ENCODE measurements at regions of chr15 and their contacts with region 1.

Region 1: GRCh38 chr15:34209421-34210282 is at the start of gene KATNBL1:
- DNase-seq: peak; percentile 99
- ATAC-seq: peak; percentile 90
- H3K4me3 ChIP-seq: peak within 1 kb of the TSS; percentile 92
- H3K27ac ChIP-seq: peak within 1 kb of the TSS; percentile 78
- H3K4me1 ChIP-seq: peaks cover 20% of the 10 kb centered on the region
- H3K27me3 ChIP-seq: no peaks in the 10 kb centered on the region
- CTCF ChIP-seq: peak; percentile 90
- total RNA-seq, gene KATNBL1: 51.6 and 57.6 TPM in 2 replicates

Region 2: DNA sequence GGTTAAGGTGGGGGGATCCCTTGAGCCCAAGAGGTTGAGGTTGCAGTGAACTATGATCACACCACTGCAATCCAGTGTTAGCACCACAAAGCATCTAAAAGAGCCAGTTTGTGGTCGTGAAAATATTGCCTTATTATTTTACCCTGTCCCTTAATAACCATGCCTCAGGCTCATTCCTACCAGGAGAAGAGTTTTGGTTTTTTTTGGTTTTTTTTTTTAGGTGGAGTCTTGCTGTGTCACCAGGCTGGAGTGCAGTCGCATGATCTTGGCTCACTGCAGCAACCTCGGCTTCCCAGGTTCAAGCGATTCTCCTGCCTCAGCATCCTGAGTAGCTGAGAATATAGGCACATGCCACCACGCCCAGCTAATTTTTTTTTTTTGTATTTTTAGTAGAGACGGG is 152.7 kb before region 1 on chr15:
- CTCF ChIA-PET with region 1: no interaction called
- POLR2A ChIA-PET with region 1: no interaction called
- intact Hi-C with region 1: loop called (anchors 1 kb)
- DNase-seq: no peak
- ATAC-seq: no peak
- H3K4me3 ChIP-seq: no peak overlapping the region
- H3K27ac ChIP-seq: no peak overlapping the region
- H3K4me1 ChIP-seq: no peaks in the 10 kb centered on the region
- H3K27me3 ChIP-seq: no peaks in the 10 kb centered on the region
- CTCF ChIP-seq: no peak

Region 3: DNA sequence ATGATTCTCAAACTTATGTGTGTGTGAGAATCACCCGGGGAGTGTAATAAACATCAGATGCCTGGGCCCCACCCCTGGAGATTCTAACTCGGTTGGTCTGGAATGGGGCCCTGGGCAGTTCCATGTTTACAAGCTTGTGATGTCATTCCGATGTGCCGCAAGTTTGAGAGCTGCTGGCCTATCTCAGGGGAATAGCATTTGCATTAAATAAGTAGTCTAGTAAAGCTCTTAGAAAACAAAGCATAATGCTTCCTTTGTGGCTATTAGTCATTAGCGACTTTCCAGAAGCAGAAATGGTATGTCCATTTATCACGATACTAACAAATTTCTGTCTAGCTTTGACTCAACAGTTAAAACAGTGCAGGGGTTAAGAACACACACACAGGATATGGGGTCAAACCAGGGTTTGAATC is 86.9 kb before region 1 on chr15:
- CTCF ChIA-PET with region 1: interaction called, 3 read pairs
- POLR2A ChIA-PET with region 1: interaction called, 11 read pairs
- intact Hi-C with region 1: no loop called
- DNase-seq: peak; percentile 91
- ATAC-seq: peak; percentile 87
- H3K4me3 ChIP-seq: no peak overlapping the region
- H3K27ac ChIP-seq: peak overlapping the region; percentile 88
- H3K4me1 ChIP-seq: peaks cover 26% of the 10 kb centered on the region
- H3K27me3 ChIP-seq: no peaks in the 10 kb centered on the region
- CTCF ChIP-seq: no peak

Region 4: GRCh38 chr15:34147371-34148140 is 62.1 kb before region 1 on chr15:
- CTCF ChIA-PET with region 1: no interaction called
- POLR2A ChIA-PET with region 1: no interaction called
- intact Hi-C with region 1: loop called (anchors 2 kb)
- DNase-seq: peak; percentile 78
- ATAC-seq: peak; percentile 98
- H3K4me3 ChIP-seq: no peak overlapping the region
- H3K27ac ChIP-seq: peak overlapping the region; percentile 48
- H3K4me1 ChIP-seq: peaks cover 18% of the 10 kb centered on the region
- H3K27me3 ChIP-seq: no peaks in the 10 kb centered on the region
- CTCF ChIP-seq: no peak

Region 5: DNA sequence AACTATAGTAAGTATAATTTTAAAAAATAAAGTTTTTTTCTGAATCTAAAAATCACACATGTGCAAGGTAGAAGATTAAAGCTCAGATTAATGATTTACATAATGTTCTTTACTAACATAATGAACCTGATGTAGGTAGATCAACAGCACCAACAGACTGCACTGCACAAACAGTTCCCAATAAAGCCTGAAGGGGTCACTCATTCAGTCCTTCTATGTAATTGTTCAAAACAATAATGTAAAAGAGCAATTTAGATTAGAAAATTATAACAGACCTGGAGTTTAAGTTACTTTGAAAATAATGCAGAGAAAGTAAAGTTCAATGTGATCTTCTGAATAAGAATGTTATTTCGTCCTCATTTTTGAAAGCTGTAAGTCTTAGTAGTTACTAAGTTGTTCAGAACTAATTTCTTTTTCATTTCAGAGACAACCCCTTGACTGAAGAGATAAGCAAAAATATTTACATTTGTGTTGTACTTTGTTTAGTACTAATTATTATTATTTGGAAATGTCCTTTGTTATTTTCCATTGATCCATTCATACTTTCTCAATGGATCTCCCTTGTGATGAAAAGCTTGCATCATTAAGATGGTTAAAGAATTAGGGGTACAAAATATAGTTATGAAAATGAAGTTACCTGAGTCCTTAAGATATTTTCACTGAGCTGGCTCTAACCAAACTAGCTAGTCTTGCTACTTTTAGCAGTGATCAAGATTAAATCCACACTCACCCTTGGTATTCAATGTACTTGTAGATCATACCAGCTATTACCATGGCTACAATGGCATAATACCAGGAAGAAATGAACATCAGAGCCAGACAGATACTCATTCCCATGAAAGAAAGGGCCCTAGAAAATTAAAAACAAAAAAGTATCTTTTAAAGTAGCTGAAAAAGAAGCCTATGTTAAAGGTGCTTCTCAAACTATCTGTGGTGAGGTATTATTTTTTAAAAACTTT is 32.0 kb after region 1 on chr15:
- CTCF ChIA-PET with region 1: no interaction called
- POLR2A ChIA-PET with region 1: no interaction called
- intact Hi-C with region 1: no loop called
- DNase-seq: peak; percentile 75
- ATAC-seq: peak; percentile 16; the same call in 1 of the 2 replicates
- H3K4me3 ChIP-seq: no peak overlapping the region
- H3K27ac ChIP-seq: peak overlapping the region; percentile 98
- H3K4me1 ChIP-seq: peaks cover 38% of the 10 kb centered on the region
- H3K27me3 ChIP-seq: no peaks in the 10 kb centered on the region
- CTCF ChIP-seq: peak; percentile 87

Region 6: GRCh38 chr15:34259566-34259965 is 49.9 kb after region 1 on chr15:
- CTCF ChIA-PET with region 1: no interaction called
- POLR2A ChIA-PET with region 1: no interaction called
- intact Hi-C with region 1: no loop called
- DNase-seq: no peak
- ATAC-seq: no peak
- H3K4me3 ChIP-seq: no peak overlapping the region
- H3K27ac ChIP-seq: no peak overlapping the region
- H3K4me1 ChIP-seq: peaks cover 8% of the 10 kb centered on the region; the same call in 1 of the 2 replicates
- H3K27me3 ChIP-seq: no peaks in the 10 kb centered on the region
- CTCF ChIP-seq: no peak

Region 7: DNA sequence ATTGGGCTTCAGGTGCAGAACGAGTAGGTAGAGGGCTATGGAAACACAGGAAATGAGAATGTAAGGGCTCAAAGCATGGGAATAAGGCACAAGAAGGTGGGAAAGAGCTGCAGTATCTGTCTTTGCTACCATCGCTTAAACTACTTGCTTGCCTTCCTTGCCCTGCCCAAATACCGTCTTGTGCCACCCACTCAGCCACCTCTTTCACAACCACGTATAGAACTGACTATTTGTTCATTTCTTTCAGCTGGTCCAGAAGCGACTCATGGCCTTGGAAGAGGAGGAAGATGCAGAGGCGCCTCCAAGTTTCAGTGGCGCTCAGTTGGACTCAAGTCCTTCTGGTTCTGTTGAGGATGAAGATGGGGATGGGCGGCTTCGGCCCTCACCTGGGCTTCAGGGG is 145.6 kb after region 1 on chr15:
- CTCF ChIA-PET with region 1: interaction called, 8 read pairs
- POLR2A ChIA-PET with region 1: interaction called, 24 read pairs
- intact Hi-C with region 1: no loop called
- DNase-seq: no peak
- ATAC-seq: no peak
- H3K4me3 ChIP-seq: no peak overlapping the region
- H3K27ac ChIP-seq: no peak overlapping the region
- H3K4me1 ChIP-seq: peaks cover 14% of the 10 kb centered on the region
- H3K27me3 ChIP-seq: no peaks in the 10 kb centered on the region
- CTCF ChIP-seq: no peak